Heart left ventricle (tissue), 16 donors: ENCODE measurements at regions of chr6 and their contacts with region 1.

Region 1: DNA sequence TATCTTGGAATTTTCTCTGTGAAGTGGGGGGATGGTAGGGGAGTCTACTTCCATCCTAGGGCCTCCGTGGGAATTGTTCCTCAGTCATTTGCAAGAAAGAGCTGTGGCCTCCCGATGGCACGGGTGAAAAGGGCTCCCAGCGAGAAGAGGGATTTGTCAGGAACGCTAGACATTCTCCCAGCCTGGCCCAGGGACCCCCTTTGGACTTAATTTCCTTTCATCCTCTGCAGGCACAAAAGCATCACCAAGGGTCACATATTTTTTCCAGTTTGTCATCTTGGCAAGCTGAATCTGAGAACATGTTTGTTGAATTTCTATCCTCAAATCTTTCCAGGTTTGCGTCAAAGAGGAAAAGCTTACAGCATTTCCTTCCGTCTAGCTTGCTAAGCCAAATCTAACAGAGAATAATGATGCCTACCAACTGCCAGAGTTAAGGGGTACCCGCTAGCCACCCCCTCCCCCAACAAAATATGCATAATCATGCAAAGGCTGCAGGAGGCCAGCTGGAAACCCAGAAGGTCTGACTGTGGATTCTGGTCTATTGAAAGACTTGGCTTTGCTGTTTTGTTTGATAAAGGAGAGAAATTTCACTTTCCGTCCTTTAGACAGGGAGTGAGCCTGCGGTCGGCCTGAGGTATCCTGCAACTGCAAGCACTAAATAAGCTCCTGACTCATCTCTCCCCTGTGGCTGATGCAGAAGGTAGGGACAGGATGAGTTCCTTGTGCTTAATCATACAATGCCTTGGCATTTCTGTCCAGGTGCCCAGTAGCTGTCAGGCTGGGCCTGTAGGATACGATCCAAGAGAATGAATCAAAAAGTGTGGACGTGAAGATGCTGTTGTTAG is 23.1 kb downstream of the PSMG4 start:
- DNase-seq: no peak
- ATAC-seq: peak in 3 of 4 donors; percentile 26 to 66 (median 37)
- H3K4me3 ChIP-seq: no peak overlapping the region
- H3K27ac ChIP-seq: peak overlapping the region in 10 of 12 donors; percentile 5 to 71 (median 50)
- H3K4me1 ChIP-seq: peaks cover 0 to 28% (median 18%) of the 10 kb centered on the region in 12 donors
- H3K27me3 ChIP-seq: no peaks in the 10 kb centered on the region
- CTCF ChIP-seq: no peak
- POLR2A ChIP-seq: no peak

Region 2: GRCh38 chr6:3356056-3356761 is 74.4 kb after region 1 on chr6:
- intact Hi-C with region 1: loop called in 1 of 10 experiments (anchors 2 kb)
- DNase-seq: peak; percentile 68 to 82 (median 73)
- ATAC-seq: peak; percentile 52 to 77 (median 76)
- H3K4me3 ChIP-seq: peak overlapping the region in 11 of 12 donors; percentile 19 to 60 (median 46)
- H3K27ac ChIP-seq: peak overlapping the region; percentile 64 to 94 (median 88)
- H3K4me1 ChIP-seq: peaks cover 6 to 30% (median 23%) of the 10 kb centered on the region in 12 donors
- H3K27me3 ChIP-seq: no peaks in the 10 kb centered on the region
- CTCF ChIP-seq: no peak
- POLR2A ChIP-seq: peak in 1 of 2 donors; percentile 35

Region 3: GRCh38 chr6:3510178-3510976 is 228.5 kb after region 1 on chr6:
- intact Hi-C with region 1: loop called in 2 of 10 experiments (anchors 5 kb)
- DNase-seq: no peak
- ATAC-seq: no peak
- H3K4me3 ChIP-seq: no peak overlapping the region
- H3K27ac ChIP-seq: no peak overlapping the region
- H3K4me1 ChIP-seq: peaks cover 0 to 17% (median 0%) of the 10 kb centered on the region in 12 donors
- H3K27me3 ChIP-seq: peaks cover 0 to 3% (median 0%) of the 10 kb centered on the region in 9 donors
- CTCF ChIP-seq: no peak
- POLR2A ChIP-seq: no peak

Region 4: GRCh38 chr6:3848925-3849605 is 567.2 kb after region 1 on chr6 and contains the start of gene FAM50B:
- intact Hi-C with region 1: loop called in 1 of 10 experiments (anchors 10 kb)
- DNase-seq: peak; percentile 93 to 96 (median 94)
- ATAC-seq: peak; percentile 95 to 98 (median 98)
- H3K4me3 ChIP-seq: peak within 1 kb of the TSS; percentile 19 to 69 (median 53)
- H3K27ac ChIP-seq: peak within 1 kb of the TSS in 11 of 12 donors; percentile 53 to 83 (median 72)
- H3K4me1 ChIP-seq: peaks cover 0 to 20% (median 2%) of the 10 kb centered on the region in 12 donors
- H3K27me3 ChIP-seq: no peaks in the 10 kb centered on the region
- CTCF ChIP-seq: peak; percentile 91 to 99 (median 94)
- POLR2A ChIP-seq: no peak
- total RNA-seq, gene FAM50B: 13.6 to 29.1 (median 21.5) TPM

Region 5: DNA sequence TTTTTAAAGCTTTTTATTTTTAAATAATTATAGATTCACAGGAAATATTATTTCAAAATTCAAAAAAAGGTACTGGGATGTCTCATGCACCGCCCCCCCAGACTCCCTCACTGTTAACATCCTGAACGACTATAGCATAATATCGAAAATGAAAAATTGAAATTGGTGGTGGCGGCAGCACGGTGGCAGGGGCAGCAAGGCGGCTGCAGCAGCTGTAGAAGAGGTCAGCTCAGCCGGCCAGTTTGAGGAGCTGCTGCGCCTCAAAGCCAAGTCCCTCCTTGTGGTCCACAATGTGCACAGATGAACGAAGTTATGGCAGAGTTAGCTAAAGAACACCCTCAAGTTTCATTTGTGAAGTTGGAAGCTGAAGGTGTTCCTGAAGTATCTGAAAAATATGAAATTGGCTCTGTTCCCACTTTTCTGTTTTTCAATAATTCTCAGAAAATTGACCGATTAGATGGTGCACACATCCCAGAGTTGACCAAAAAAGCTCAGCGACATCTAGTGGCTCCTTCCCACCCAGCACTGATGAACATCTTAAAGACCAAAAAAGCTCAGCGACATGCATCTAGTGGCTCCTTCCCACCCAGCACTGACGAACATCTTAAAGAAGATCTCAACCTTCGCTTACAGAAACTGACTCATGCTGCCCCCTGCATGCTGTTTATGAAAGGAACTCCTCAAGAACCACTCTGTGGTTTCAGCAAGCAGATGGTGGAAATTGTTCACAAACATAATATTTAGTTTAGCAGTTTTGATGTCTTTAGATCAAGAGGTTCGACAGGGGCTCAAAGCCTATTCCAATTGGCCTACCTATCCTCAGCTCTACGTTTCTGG is 696.2 kb after region 1 on chr6:
- intact Hi-C with region 1: loop called in 3 of 10 experiments (anchors 5 to 10 kb)
- DNase-seq: peak in 3 of 5 donors; percentile 15 to 40 (median 32)
- ATAC-seq: peak in 3 of 4 donors; percentile 86 to 92 (median 87)
- H3K4me3 ChIP-seq: peak overlapping the region in 1 of 12 donors; percentile 4
- H3K27ac ChIP-seq: no peak overlapping the region
- H3K4me1 ChIP-seq: peaks cover 0 to 8% (median 0%) of the 10 kb centered on the region in 12 donors
- H3K27me3 ChIP-seq: no peaks in the 10 kb centered on the region
- CTCF ChIP-seq: peak; percentile 41 to 74 (median 60)
- POLR2A ChIP-seq: no peak

Region 6: GRCh38 chr6:3990692-3991501 is 709.0 kb after region 1 on chr6:
- intact Hi-C with region 1: loop called in 6 of 10 experiments (anchors 5 to 10 kb)
- DNase-seq: peak; percentile 88 to 92 (median 89)
- ATAC-seq: peak; percentile 77 to 95 (median 94)
- H3K4me3 ChIP-seq: peak overlapping the region in 11 of 12 donors; percentile 17 to 69 (median 52)
- H3K27ac ChIP-seq: peak overlapping the region in 9 of 12 donors; percentile 5 to 82 (median 63)
- H3K4me1 ChIP-seq: peaks cover 0 to 20% (median 3%) of the 10 kb centered on the region in 12 donors
- H3K27me3 ChIP-seq: no peaks in the 10 kb centered on the region
- CTCF ChIP-seq: peak; percentile 70 to 92 (median 88)
- POLR2A ChIP-seq: no peak